IMR-90 (cell line): ENCODE measurements at regions of chr6 and their contacts with region 1.

Region 1: GRCh38 chr6:28355743-28356665 is 6.3 kb downstream of the ZKSCAN3 start:
- DNase-seq: peak; percentile 91
- ATAC-seq: peak; percentile 94
- H3K4me3 ChIP-seq: peak overlapping the region; percentile 64
- H3K27ac ChIP-seq: peak overlapping the region; percentile 71
- H3K4me1 ChIP-seq: peaks cover 15% of the 10 kb centered on the region
- H3K27me3 ChIP-seq: no peaks in the 10 kb centered on the region
- CTCF ChIP-seq: peak; percentile 81
- POLR2A ChIP-seq: no peak
- RAD21 ChIP-seq: peak; percentile 82

Region 2: DNA sequence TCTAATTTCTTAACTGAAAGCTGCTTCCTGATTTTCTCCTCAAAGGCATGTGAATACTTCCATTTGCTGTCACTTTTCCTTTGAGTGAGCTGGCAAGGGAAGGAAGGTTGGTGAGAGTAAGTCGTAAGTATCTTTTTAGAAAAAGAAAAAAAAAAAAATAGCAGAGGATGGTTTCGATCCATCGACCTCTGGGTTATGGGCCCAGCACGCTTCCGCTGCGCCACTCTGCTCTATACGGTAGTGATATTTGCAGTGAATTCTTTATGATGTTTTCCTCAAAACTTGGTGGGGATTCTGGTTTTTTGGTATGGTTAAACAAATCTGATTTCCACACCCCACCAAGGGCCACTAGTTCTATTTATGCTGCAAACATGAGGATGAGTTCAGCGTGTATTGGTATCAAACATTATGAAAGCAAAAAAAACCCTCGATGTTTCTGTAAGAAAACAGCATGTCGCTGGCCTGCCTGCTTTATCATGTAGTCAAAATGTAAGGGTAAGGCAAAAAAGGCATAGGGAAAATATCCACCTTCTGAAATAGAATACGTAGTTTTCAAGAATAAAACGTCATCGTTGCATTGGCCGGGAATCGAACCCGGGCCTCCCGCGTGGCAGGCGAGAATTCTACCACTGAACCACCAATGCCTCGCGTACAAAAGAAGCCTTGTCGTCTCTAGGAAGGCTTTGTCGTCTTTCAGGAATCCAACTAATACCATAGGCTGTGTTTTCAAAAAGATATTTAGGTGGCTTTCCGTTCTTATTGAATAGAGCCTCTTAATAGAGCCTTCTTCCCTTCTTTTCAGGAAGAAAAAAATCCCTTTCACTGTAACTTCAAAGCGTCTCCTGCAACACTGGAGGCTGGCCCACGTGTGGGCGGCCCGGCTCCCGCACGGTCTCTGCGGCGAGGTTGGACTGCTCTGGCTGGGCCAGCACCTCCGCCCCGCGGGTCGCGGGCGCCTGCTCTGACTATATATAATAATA is 453.4 kb before region 1 on chr6:
- CTCF ChIA-PET with region 1: no interaction called
- POLR2A ChIA-PET with region 1: no interaction called
- dilution Hi-C with region 1: no loop called
- in situ Hi-C with region 1: no loop called
- intact Hi-C with region 1: loop called (anchors 2 kb)
- DNase-seq: peak; percentile 78
- ATAC-seq: peak; percentile 94
- H3K4me3 ChIP-seq: peak overlapping the region; percentile 66
- H3K27ac ChIP-seq: no peak overlapping the region
- H3K4me1 ChIP-seq: no peaks in the 10 kb centered on the region
- H3K27me3 ChIP-seq: no peaks in the 10 kb centered on the region
- CTCF ChIP-seq: no peak
- POLR2A ChIP-seq: no peak
- RAD21 ChIP-seq: no peak

Region 3: GRCh38 chr6:28005124-28005890 is 350.7 kb before region 1 on chr6:
- CTCF ChIA-PET with region 1: no interaction called
- POLR2A ChIA-PET with region 1: no interaction called
- dilution Hi-C with region 1: no loop called
- in situ Hi-C with region 1: no loop called
- intact Hi-C with region 1: no loop called
- DNase-seq: no peak
- ATAC-seq: no peak
- H3K4me3 ChIP-seq: no peak overlapping the region
- H3K27ac ChIP-seq: no peak overlapping the region
- H3K4me1 ChIP-seq: no peaks in the 10 kb centered on the region
- H3K27me3 ChIP-seq: no peaks in the 10 kb centered on the region
- CTCF ChIP-seq: no peak
- POLR2A ChIP-seq: no peak
- RAD21 ChIP-seq: no peak

Region 4: DNA sequence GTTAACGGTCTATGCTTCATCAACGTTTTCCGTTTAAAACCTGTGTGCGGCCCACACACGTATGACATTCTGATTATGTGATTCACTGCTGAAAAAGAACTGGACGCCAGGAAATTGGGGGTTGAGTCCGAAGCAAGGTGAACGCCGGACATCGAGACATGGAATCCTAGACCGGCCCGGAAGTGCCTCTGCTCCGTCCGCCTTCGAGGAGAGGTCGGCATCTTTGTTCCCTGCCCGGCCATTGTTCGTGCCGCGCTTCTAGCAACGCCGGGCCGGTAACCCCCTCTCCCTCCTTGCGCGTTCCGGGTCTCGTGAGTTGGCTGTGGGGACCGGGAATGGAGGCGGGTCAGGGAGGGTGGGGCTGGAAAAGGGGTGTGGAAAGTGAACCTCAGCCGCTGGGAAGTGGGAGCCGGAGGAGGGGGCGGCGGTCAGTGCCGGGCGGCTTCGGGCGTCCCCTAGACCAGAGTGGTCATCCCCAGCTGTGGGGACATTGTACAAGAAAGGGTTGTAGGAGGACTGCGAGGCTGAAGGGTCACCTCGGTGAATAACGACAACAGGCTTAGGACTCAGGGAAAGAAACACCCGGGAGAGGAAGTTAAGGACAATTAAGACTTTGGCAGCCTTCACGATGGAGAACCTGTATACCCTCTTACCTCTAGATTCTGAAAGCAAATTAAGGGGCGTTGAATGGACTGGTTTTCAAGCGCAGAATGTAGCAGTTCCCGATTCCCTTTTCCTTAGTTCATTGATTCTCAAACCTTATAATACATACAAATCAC is 130.8 kb before region 1 on chr6 and contains the start of gene ZSCAN9:
- CTCF ChIA-PET with region 1: interaction called, 3 read pairs
- POLR2A ChIA-PET with region 1: no interaction called
- dilution Hi-C with region 1: no loop called
- in situ Hi-C with region 1: no loop called
- intact Hi-C with region 1: loop called (anchors 2 kb)
- DNase-seq: peak; percentile 89
- ATAC-seq: peak; percentile 93
- H3K4me3 ChIP-seq: peak within 1 kb of the TSS; percentile 82
- H3K27ac ChIP-seq: peak within 1 kb of the TSS; percentile 61
- H3K4me1 ChIP-seq: no peaks in the 10 kb centered on the region
- H3K27me3 ChIP-seq: no peaks in the 10 kb centered on the region
- CTCF ChIP-seq: no peak
- POLR2A ChIP-seq: no peak
- RAD21 ChIP-seq: 0 out of 2 replicates have a peak, but pooled peaks have one; percentile 10
- total RNA-seq, gene ZSCAN9: 16.9 and 17.7 TPM in 2 replicates

Region 5: DNA sequence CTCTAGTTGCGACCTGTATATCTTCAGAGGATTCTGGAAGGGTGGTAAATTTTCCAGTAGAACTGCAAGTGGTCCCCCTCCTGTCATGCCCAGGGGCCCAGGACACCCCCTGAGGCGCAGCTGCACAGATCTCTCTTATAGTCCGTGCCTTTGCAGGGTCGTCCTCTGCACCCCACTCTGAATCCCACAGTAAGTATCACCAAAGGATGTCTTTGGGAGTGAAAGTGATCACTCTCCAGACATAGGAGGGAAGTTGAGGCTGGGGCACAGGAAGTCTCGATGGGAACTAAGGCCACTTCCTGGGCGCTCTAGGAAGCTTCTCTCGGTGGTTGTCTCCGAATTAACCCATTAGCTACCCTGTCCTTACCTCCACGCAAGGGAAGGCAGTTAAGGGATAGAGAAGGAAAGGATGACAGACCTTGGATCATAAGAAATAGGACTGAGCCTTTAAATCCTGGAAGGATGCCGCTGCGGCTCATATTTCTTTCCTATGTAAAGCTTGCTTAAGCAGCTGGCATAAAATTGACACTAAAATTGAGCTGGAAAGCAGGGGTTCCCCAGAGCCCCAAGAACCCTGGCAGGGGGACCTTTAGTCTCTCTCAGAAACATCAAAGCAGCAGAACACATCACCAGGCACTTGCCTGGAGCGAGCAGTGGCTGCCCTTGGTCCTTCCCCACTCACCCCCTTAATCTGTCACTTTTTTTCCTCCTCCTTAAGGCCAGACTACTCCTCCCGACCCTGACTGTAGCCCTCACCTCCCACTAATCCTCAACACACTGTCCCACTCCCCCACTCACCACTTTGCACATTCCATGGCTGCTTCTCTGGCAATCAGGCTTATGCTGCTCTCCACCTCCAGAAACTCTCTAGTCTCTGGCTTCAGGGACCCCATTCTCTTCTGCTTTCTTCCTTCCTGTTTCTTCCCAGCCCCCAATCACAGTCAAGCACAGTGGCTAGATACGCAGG is 103.7 kb before region 1 on chr6 and contains the start of gene ZKSCAN4:
- CTCF ChIA-PET with region 1: interaction called, 5 read pairs
- POLR2A ChIA-PET with region 1: no interaction called
- dilution Hi-C with region 1: no loop called
- in situ Hi-C with region 1: no loop called
- intact Hi-C with region 1: loop called (anchors 5 kb)
- DNase-seq: peak; percentile 92
- ATAC-seq: peak; percentile 96
- H3K4me3 ChIP-seq: peak within 1 kb of the TSS; percentile 58
- H3K27ac ChIP-seq: peak within 1 kb of the TSS; percentile 59
- H3K4me1 ChIP-seq: peaks cover 7% of the 10 kb centered on the region
- H3K27me3 ChIP-seq: no peaks in the 10 kb centered on the region
- CTCF ChIP-seq: no peak
- POLR2A ChIP-seq: no peak
- RAD21 ChIP-seq: peak; percentile 27; the same call in 1 of the 2 replicates
- total RNA-seq, gene ZKSCAN4: 4.7 and 5.7 TPM in 2 replicates

Region 6: GRCh38 chr6:28266962-28267694 is 88.9 kb before region 1 on chr6 and contains the start of gene ZSCAN26:
- CTCF ChIA-PET with region 1: interaction called, 11 read pairs
- POLR2A ChIA-PET with region 1: no interaction called
- dilution Hi-C with region 1: no loop called
- in situ Hi-C with region 1: no loop called
- intact Hi-C with region 1: no loop called
- DNase-seq: peak; percentile 89
- ATAC-seq: peak; percentile 92
- H3K4me3 ChIP-seq: peak within 1 kb of the TSS; percentile 72
- H3K27ac ChIP-seq: peak within 1 kb of the TSS; percentile 95
- H3K4me1 ChIP-seq: no peaks in the 10 kb centered on the region
- H3K27me3 ChIP-seq: no peaks in the 10 kb centered on the region
- CTCF ChIP-seq: no peak
- POLR2A ChIP-seq: peak; percentile 59; the same call in 1 of the 2 replicates
- RAD21 ChIP-seq: no peak
- total RNA-seq, gene ZSCAN26: 22.8 and 42.1 TPM in 2 replicates

Region 7: GRCh38 chr6:28281288-28282064 is 74.5 kb before region 1 on chr6 and contains the start of gene PGBD1:
- CTCF ChIA-PET with region 1: interaction called, 4 read pairs
- POLR2A ChIA-PET with region 1: no interaction called
- dilution Hi-C with region 1: no loop called
- in situ Hi-C with region 1: no loop called
- intact Hi-C with region 1: loop called (anchors 2 kb)
- DNase-seq: peak; percentile 77
- ATAC-seq: peak; percentile 97
- H3K4me3 ChIP-seq: peak within 1 kb of the TSS; percentile 95
- H3K27ac ChIP-seq: peak within 1 kb of the TSS; percentile 61
- H3K4me1 ChIP-seq: peaks cover 3% of the 10 kb centered on the region; the same call in 1 of the 2 replicates
- H3K27me3 ChIP-seq: no peaks in the 10 kb centered on the region
- CTCF ChIP-seq: no peak
- POLR2A ChIP-seq: peak; percentile 52
- RAD21 ChIP-seq: peak; percentile 21; the same call in 1 of the 2 replicates
- total RNA-seq, gene PGBD1: 6.3 and 6.9 TPM in 2 replicates

Region 8: DNA sequence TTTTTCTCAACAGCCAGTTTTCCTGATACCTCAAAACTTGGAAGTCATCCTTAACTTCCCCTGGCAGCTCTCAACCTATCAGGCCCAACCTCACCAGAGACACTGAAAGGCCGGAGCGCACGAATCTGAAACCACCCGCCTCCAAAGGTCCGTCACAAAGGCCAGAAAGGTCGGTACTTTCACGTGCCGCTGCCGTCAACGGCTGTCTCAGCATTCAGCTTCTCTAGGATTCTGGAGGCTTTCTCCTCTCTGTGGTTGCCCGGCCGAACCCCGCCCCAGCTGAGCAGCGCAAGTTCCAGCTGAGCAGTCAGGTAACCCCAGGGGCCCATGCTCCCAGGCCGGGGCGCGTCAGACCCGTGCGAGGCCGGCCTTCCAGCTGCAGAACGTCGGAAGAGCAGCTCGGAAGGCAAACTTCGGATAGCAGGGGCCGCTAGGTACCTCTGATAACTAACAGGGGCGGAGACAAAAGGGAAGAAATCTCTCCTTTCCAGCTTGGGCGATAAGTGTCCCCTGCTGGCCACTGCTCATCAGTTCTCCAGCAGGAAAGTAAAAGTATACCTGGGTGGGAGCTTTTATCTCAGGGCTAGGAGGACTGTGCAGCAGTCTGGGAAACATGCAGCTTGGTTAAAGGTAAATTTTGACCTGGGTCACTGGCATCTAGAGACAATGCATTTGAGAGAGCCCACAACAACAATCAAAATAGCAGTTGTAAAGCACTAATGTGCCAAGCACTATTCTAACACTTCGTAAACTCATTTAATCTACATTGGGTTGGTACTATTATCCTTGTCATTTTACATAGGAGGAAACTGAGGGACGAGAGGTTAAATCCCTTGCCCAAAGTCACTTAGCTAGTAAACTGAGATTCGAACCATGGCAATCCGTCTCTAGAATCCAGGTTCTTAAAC is 27.5 kb after region 1 on chr6:
- CTCF ChIA-PET with region 1: interaction called, 15 read pairs
- POLR2A ChIA-PET with region 1: no interaction called
- dilution Hi-C with region 1: no loop called
- in situ Hi-C with region 1: no loop called
- intact Hi-C with region 1: no loop called
- DNase-seq: peak; percentile 93
- ATAC-seq: peak; percentile 98
- H3K4me3 ChIP-seq: peak overlapping the region; percentile 48
- H3K27ac ChIP-seq: peak overlapping the region; percentile 49
- H3K4me1 ChIP-seq: no peaks in the 10 kb centered on the region
- H3K27me3 ChIP-seq: no peaks in the 10 kb centered on the region
- CTCF ChIP-seq: peak; percentile 51
- POLR2A ChIP-seq: peak; percentile 77
- RAD21 ChIP-seq: peak; percentile 46